ENCODE measurements at regions of chr17 and their contacts with region 1.

Region 1: DNA sequence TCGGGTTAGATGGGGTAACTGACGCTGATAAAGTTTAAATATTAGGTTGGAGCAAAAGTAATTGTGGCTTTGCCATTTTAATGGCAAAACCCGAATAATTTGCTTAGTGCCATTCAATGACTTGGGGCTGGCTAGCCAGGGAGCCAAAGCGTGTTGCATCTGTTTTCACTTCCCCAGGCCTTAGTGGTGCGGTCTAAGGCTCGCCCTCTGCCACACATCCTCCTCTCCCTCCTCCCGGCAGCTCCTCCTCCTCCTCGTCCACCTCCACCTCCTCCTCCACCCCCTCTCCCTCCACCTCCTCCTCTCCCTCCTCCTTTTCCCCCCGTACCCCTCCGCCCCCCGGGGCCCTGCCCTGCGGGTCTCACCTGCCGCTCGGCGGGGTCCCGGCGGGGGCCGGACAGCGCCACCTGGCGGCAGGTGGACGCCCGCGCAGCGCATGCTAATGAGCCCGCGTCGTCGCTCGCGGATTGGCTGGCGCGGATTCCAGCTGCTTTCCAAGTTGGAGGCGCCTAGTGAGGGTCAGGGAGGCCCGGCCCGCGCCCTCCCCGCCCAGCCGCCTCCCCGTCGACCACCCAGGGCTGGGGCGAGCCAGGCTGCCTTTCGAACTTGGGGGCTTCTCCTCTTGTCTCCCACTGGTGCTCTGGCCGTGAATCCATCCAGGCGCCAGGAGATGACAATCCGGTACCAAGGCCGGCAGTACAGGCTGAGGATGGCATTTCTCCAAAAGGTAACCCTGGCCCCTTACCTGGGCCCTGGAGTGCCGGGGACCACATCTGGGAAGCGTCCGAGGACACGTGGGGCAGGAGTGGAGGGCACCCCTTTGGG is 36.6 kb upstream of the RGS9 start:
- DNase-seq: peak; percentile 79
- H3K4me3 Mint-ChIP-seq: peak overlapping the region; percentile 57
- H3K27ac Mint-ChIP-seq: no peak overlapping the region
- H3K4me1 Mint-ChIP-seq: no peaks in the 10 kb centered on the region
- H3K27me3 Mint-ChIP-seq: peaks cover 10% of the 10 kb centered on the region
- CTCF ChIP-seq: peak; percentile 63

Region 2: DNA sequence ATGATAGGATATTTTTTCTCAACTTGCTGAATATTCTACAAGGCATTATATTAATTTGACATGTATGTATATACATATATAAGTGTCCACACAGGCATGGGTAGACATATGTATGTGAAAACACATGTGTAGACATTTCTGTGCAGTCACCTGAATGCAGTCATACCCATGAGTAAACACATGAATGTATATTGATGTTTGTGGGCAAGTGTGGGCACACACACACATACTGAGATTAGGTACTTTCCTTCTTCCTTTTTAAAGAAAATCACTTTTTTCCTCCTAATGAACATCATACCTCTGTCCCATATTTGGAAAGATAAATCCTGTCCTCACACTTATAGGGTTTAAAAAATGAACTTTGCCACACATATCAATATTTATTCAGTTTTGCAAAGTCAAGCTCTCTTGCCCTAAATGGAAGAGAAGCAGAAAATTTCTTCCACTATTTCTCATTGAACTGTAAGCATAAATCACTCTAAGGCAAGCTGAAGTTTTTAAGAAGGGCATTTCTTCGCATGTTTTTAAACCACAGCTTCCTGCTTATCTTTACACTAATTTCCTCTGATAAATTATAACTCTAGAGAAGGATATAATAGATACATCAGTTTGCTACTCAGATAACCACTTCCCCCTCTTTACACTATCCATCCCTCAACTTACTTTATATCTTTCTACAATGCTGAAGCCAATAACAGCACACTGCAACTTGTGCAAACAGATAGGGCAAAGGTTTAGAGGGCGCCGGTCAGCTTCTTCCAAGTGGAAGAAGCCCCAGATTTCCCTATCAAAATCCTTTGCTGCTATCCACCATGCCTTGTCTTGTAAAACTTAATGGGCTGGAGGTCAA is 131.7 kb before region 1 on chr17:
- CTCF ChIA-PET with region 1: interaction called, 4 read pairs
- intact Hi-C with region 1: loop called (anchors 10 kb)
- DNase-seq: no peak
- H3K4me3 Mint-ChIP-seq: no peak overlapping the region
- H3K27ac Mint-ChIP-seq: no peak overlapping the region
- H3K4me1 Mint-ChIP-seq: no peaks in the 10 kb centered on the region
- H3K27me3 Mint-ChIP-seq: no peaks in the 10 kb centered on the region
- CTCF ChIP-seq: no peak

Region 3: GRCh38 chr17:65122836-65123756 is 22.6 kb after region 1 on chr17:
- CTCF ChIA-PET with region 1: no interaction called
- intact Hi-C with region 1: no loop called
- DNase-seq: peak; percentile 74
- H3K4me3 Mint-ChIP-seq: peak overlapping the region; percentile 64
- H3K27ac Mint-ChIP-seq: peak overlapping the region; percentile 27
- H3K4me1 Mint-ChIP-seq: no peaks in the 10 kb centered on the region
- H3K27me3 Mint-ChIP-seq: peaks cover 15% of the 10 kb centered on the region
- CTCF ChIP-seq: no peak